Thyroid gland (tissue), 4 donors: ENCODE measurements at regions of chr1 and their contacts with region 1.

Region 1: DNA sequence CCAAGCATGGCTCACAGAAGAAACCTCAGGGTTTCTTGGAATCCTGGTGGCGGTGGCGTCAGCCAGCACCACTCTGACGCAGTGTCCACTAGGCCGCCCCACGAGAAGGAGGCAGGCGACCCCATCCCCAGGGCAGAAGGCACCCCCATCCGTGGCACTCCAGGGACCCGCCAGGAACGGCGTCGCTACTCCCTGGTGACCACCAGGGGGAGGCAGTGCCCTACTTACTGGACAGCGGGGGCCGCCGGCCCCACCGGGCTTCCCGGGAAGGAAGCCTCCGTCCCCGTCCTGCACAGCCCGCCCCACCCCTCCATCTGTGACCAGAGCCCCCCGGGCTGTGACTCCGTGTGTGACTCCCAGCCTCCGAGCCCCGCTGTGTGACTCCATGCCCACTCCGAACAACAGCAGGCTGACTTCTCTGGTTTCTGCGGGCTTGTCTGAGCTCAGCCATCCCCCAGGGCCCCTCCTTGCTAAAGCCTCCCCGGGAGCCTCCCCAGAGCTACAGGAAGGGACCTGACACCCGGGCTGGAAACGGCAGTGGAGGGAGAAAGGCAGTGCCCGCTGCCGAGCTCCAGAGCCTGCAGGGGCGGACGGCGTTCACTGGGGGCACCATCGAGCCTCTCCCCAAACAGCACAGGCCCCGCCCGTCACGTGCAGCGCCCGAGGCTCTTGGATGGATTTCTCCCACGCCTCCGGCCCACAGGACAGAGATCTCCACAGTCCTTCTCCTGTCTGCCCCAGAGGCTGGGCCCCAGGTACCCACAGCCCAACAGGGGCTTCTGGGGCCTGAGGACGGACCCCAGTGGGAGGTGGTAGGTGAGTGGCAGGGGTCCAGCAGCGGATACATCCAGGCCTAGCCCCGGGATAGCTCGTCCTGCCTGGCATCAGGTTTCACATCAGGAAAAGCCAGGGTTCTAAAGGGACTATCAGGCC is 21.1 kb downstream of the KIF17 start:
- DNase-seq: peak; percentile 89 to 90
- H3K4me3 ChIP-seq: peak overlapping the region in 2 of 3 donors; percentile 41 to 79
- H3K27ac ChIP-seq: peak overlapping the region; percentile 81 to 84 (median 82)
- H3K4me1 ChIP-seq: peaks cover 0 to 8% of the 10 kb centered on the region in 2 donors
- H3K27me3 ChIP-seq: no peaks in the 10 kb centered on the region
- CTCF ChIP-seq: peak; percentile 75 to 96 (median 88)
- POLR2A ChIP-seq: no peak

Region 2: GRCh38 chr1:20569523-20570098 is 127.1 kb before region 1 on chr1:
- intact Hi-C with region 1: no loop called
- DNase-seq: no peak
- H3K4me3 ChIP-seq: no peak overlapping the region
- H3K27ac ChIP-seq: no peak overlapping the region
- H3K4me1 ChIP-seq: no peaks in the 10 kb centered on the region
- H3K27me3 ChIP-seq: no peaks in the 10 kb centered on the region
- CTCF ChIP-seq: no peak
- POLR2A ChIP-seq: no peak

Region 3: GRCh38 chr1:20871419-20871818 is 174.8 kb after region 1 on chr1:
- intact Hi-C with region 1: loop called (anchors 5 kb)
- DNase-seq: no peak
- H3K4me3 ChIP-seq: no peak overlapping the region
- H3K27ac ChIP-seq: no peak overlapping the region
- H3K4me1 ChIP-seq: no peaks in the 10 kb centered on the region
- H3K27me3 ChIP-seq: no peaks in the 10 kb centered on the region
- CTCF ChIP-seq: no peak
- POLR2A ChIP-seq: no peak

Region 4: DNA sequence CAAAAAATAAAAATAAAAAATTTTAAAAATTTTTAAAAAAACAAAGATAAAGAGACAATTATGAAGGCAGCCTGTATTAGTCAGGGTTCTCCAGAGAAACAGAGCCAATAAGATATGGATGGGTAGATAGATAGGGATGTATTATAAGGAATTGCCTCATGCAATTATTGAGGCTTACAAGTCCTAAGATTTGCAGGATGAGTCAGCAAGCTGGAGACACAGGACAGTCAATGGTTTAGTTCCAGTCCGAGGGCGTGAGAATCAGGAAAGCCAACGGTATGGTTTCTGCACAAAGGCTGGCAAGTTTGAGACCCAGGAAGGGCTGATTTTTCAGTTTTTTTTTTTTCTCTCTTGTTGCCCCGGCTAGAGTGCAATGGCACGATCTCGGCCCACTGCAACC is 504.1 kb after region 1 on chr1:
- intact Hi-C with region 1: loop called (anchors 2 kb)
- DNase-seq: no peak
- H3K4me3 ChIP-seq: no peak overlapping the region
- H3K27ac ChIP-seq: no peak overlapping the region
- H3K4me1 ChIP-seq: no peaks in the 10 kb centered on the region
- H3K27me3 ChIP-seq: no peaks in the 10 kb centered on the region
- CTCF ChIP-seq: no peak
- POLR2A ChIP-seq: no peak